HCT116 (cell line): ENCODE measurements at regions of chr11 and their contacts with region 1.

Region 1: DNA sequence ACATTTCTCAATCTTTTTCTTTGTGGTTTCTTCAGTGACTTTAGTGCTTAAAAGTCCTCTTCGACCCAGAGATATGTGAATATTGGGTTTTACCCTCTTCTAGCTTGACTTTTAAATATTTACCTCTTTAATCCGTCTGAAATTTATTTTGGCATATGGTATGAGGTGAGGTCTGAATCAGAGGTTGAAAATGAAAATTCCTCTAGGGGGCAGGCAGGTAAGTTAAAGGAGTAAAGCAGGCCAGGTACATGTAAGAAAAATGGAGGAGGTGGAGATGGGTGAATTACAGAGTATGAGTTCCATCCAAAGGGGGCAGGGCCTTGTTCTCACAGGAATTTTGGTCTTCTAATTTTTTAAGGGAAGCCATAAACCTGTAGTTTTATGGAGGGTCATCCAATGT is 263.8 kb upstream of the NARS2 start:
- DNase-seq: peak; percentile 6
- ATAC-seq: peak; percentile 75
- H3K4me3 ChIP-seq: no peak overlapping the region
- H3K27ac ChIP-seq: no peak overlapping the region
- H3K4me1 ChIP-seq: no peaks in the 10 kb centered on the region
- H3K27me3 ChIP-seq: peaks cover 12% of the 10 kb centered on the region
- CTCF ChIP-seq: peak; percentile 13 to 42 (median 35); a peak in 5 of 6 replicates
- POLR2A ChIP-seq: no peak
- RAD21 ChIP-seq: peak; percentile 33; the same call in 1 of the 2 replicates

Region 2: DNA sequence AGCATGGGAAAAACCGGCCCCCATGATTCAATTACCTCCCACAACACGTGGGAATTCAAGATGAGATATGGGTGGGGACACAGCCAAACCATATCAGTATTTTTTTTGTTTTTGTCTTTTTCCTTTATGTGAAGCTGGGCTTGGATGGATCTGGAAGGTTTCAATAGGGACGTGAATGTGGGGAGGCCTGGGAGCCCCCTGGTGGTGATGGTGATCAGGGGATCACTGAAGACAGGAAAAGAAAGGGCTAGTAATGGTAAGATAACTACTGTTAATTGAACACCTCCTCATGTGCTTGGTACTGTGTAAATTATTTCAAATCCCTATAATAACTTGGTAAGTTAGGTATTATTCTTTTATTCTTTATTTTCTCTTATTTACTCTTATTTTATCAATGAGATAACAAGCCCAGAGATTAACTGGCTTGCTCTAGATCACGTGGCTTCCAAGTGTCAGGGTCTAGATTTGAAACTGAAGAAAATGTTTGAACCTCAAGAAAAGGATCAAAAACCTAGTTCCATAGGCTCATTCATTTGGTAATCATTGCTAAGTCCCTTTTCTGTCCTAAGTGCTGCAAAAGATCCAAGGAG is 238.2 kb after region 1 on chr11:
- CTCF ChIA-PET with region 1: no interaction called
- POLR2A ChIA-PET with region 1: no interaction called
- RAD21 ChIA-PET with region 1: no interaction called
- intact Hi-C with region 1: loop called (anchors 5 kb)
- DNase-seq: peak; percentile 32
- ATAC-seq: peak; percentile 88
- H3K4me3 ChIP-seq: no peak overlapping the region
- H3K27ac ChIP-seq: no peak overlapping the region
- H3K4me1 ChIP-seq: no peaks in the 10 kb centered on the region
- H3K27me3 ChIP-seq: no peaks in the 10 kb centered on the region
- CTCF ChIP-seq: peak; percentile 49 to 81 (median 70); a peak in 5 of 6 replicates
- POLR2A ChIP-seq: no peak
- RAD21 ChIP-seq: peak; percentile 52